Naive thymus-derived CD8-positive, alpha-beta T cell (primary cell): ENCODE measurements at regions of chr15 and their contacts with region 1.

Region 1: DNA sequence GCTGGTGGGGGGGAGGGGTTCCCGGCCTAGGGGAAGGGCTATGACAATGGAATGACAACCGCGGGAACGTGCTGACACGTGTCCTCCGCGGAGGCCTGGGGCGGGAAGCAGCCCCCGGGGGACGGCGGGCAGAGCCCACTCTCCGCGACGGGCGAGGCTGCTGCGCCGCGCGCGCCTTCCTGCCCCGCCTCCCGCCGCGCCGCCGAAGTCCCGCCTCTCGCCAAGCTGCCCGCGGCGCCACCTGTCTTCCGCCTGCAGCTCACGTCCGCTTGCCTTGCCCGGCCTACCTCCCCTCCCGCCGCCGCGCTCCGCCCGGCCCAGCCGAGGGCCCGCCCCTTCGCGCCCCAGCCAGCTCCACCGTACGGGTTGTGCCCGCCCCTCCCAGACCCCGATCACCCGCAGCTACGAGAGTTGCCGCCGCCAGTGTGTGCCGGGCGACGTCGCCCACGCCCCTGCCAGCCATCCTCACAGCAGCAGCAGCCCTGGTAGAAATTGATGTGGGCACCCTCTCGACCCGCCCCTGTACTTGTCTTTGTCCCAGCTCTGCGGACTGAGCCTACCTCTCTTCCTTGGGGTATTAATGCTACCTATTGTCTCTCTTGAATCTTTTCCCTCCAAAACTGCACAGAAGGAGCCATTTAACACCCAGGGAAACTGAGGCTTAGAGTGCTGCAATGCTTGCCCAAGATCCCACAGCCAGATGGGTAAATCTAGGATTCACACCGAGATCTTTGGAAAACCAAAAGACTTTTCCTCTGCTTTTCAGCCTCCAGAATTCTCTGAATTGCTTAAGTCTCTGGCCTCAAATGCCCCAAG is at the start of gene PARP16:
- DNase-seq: peak; percentile 83 to 95 (median 89)
- ATAC-seq: peak; percentile 95
- H3K4me3 Mint-ChIP-seq: peak within 1 kb of the TSS; percentile 84 to 93 (median 89)
- H3K27ac Mint-ChIP-seq: peak within 1 kb of the TSS; percentile 83 to 96 (median 93)
- H3K4me1 Mint-ChIP-seq: peaks cover 20 to 51% (median 47%) of the 10 kb centered on the region in 4 donors
- H3K27me3 Mint-ChIP-seq: no peaks in the 10 kb centered on the region
- polyA plus RNA-seq, gene PARP16: 27.6 to 39.3 (median 30.0) TPM

Region 2: DNA sequence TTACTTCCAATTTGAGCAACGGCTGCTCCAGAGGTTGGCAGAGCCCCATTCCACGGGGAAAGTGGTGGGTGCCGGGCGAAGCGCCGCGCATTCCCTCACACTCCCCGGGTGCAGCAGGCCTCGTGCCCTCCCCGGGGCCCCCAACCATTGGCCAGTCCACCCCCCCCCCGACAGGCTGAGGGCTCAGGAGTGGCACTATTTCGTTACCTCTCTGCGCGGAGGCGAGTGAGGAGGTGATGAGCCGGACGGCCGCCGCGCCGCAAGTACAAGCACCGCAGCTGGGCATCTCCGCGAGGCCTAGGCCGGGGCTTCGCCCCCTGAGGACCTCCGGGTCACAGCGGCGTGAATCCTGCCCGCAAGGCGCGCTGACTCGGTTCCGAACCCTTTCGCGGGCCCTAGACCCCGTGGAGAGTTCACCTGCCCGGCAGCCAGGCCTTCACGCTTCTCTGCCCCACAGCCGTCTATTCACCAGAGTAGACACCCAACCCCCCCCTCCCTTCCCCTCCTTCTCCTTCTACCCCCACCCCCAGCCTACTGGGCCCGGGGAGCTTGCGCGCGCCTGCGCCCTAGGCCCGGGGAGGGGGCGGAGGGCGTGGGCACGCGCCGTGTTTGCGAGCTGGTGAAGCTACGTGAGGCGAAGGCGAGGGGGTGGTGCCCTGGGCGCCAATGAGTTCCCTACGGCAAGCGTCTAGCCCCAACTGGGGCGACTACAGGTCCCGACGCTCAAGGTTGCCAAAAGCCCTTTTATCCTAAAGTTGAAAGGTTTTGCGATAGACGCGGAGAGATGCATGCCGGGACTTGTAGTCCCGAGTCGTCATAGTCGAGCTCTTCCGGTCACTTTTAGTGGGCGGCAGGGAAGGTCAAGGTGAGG is 101.8 kb before region 1 on chr15 and contains the start of gene CLPX:
- POLR2A ChIA-PET with region 1: interaction called, 41 read pairs
- DNase-seq: peak; percentile 79 to 96 (median 92)
- ATAC-seq: peak; percentile 96 to 97
- H3K4me3 Mint-ChIP-seq: peak within 1 kb of the TSS; percentile 89 to 97 (median 94)
- H3K27ac Mint-ChIP-seq: peak within 1 kb of the TSS; percentile 92 to 98 (median 97)
- H3K4me1 Mint-ChIP-seq: peaks cover 10 to 37% (median 31%) of the 10 kb centered on the region in 4 donors
- H3K27me3 Mint-ChIP-seq: no peaks in the 10 kb centered on the region
- polyA plus RNA-seq, gene CLPX: 30.0 to 33.8 (median 31.3) TPM

Region 3: DNA sequence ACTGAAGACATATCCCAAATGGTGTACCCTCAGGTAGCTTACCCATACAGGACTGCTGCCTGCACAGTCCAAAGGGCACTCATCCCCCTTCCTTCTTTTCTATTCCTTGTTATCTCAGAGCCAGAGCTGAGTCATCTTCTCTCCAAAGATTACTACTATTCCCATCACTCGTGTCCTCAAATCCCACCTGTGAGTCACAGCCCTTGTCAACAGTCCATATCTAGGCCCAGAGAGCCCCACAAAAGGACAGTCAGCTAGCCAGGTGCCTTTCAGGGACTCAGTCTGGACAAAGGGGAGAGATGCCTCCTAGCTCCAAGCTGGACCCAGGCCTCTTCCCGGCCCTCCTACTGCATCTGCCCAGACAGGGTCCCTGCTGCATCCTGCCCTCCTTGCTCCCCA is 11.2 kb before region 1 on chr15:
- POLR2A ChIA-PET with region 1: interaction called, 32 read pairs
- DNase-seq: no peak
- ATAC-seq: no peak
- H3K4me3 Mint-ChIP-seq: peak overlapping the region in 9 of 10 donors; percentile 9 to 81 (median 62)
- H3K27ac Mint-ChIP-seq: peak overlapping the region; percentile 59 to 93 (median 90)
- H3K4me1 Mint-ChIP-seq: peaks cover 36 to 73% (median 50%) of the 10 kb centered on the region in 4 donors
- H3K27me3 Mint-ChIP-seq: no peaks in the 10 kb centered on the region

Region 4: GRCh38 chr15:65323071-65323511 is 36.2 kb after region 1 on chr15:
- POLR2A ChIA-PET with region 1: no interaction called
- DNase-seq: no peak
- ATAC-seq: no peak
- H3K4me3 Mint-ChIP-seq: no peak overlapping the region
- H3K27ac Mint-ChIP-seq: no peak overlapping the region
- H3K4me1 Mint-ChIP-seq: peaks cover 0 to 4% (median 0%) of the 10 kb centered on the region in 4 donors
- H3K27me3 Mint-ChIP-seq: peaks cover 0 to 16% (median 4%) of the 10 kb centered on the region in 5 donors

Region 5: DNA sequence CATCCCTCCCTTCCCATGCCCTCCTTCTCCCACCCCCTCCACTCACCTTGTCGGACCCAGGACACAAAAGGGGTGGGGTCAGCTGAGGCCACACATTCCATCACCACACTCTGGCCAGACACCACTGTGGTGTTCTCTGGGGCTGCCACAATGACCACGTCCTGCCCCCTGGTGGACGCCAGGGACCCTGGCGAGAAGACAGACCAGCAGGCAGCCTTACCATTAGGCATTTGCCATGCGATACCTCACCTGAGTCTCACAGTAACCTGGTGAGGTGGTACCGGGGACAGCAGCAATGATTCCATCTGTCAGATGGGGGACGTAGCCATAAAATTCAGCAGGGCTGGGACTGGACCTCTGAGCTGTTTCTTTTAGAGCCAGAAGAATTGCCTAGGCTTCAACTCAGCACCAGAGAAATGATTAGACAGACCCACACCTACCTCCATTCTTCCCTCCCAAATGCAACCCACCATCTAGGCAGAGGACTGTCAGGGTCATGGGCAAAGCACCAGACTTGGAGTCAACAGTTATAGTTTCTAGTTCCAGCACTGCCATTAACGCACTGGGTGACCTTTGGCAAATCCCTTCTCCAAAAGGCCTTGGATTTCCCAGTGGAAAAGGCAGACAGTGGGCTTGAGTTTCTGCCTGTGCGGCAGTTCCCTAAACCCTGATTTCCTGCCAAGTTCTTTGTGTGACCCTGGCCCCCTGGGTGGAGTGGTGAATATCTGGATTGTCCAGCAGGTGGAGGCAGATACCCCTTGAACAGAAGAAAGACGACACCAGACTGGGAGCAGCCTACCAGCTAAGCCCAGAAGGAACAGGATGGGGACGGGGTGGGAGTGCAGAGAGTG is 114.1 kb after region 1 on chr15:
- POLR2A ChIA-PET with region 1: no interaction called
- DNase-seq: peak in 6 of 10 donors; percentile 8 to 31 (median 26)
- ATAC-seq: peak; percentile 63 to 70
- H3K4me3 Mint-ChIP-seq: no peak overlapping the region
- H3K27ac Mint-ChIP-seq: no peak overlapping the region
- H3K4me1 Mint-ChIP-seq: peaks cover 2 to 13% (median 9%) of the 10 kb centered on the region in 4 donors
- H3K27me3 Mint-ChIP-seq: peaks cover 21 to 66% (median 36%) of the 10 kb centered on the region in 5 donors